ENCODE measurements at regions of chr12 and their contacts with region 1.

Region 1: GRCh38 chr12:109888179-109889020 is 8.1 kb upstream of the GLTP start:
- DNase-seq: peak; percentile 32 to 48 (median 39)
- H3K4me3 ChIP-seq: peak overlapping the region; percentile 2 to 8
- H3K4me3 Mint-ChIP-seq: peak overlapping the region; percentile 60 to 86 (median 82)
- H3K27ac ChIP-seq: peak overlapping the region; percentile 52
- H3K27ac Mint-ChIP-seq: peak overlapping the region; percentile 82 to 98 (median 97)
- H3K4me1 ChIP-seq: peaks cover 42% of the 10 kb centered on the region
- H3K4me1 Mint-ChIP-seq: peaks cover 22 to 44% (median 35%) of the 10 kb centered on the region in 4 donors
- H3K27me3 ChIP-seq: no peaks in the 10 kb centered on the region
- H3K27me3 Mint-ChIP-seq: peaks cover 0 to 2% of the 10 kb centered on the region in 2 donors

Region 2: DNA sequence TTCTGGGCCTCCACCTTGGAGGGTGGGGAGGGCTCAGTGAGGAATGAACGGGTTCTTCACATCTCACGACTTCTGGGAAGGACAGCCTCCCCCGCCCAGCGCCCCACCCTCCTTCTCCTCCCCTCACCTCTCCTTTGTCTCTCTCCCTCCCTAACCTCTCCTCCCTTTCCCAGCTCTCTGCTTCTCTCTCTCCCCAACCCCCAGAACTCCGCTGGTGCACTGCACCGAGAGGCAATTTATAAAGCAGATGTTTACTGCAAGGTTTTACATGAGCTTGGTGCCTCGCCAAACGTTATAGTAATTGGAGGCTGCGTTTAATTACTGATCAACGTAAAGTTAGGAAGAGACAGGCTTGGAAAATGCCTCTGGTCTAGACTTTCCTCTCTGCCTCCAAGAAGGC is 217.7 kb before region 1 on chr12:
- CTCF ChIA-PET with region 1: no interaction called
- POLR2A ChIA-PET with region 1: no interaction called
- intact Hi-C with region 1: no loop called
- DNase-seq: no peak
- H3K4me3 ChIP-seq: no peak overlapping the region
- H3K4me3 Mint-ChIP-seq: no peak overlapping the region
- H3K27ac ChIP-seq: no peak overlapping the region
- H3K27ac Mint-ChIP-seq: no peak overlapping the region
- H3K4me1 ChIP-seq: no peaks in the 10 kb centered on the region
- H3K4me1 Mint-ChIP-seq: no peaks in the 10 kb centered on the region
- H3K27me3 ChIP-seq: no peaks in the 10 kb centered on the region
- H3K27me3 Mint-ChIP-seq: peaks cover 7 to 13% of the 10 kb centered on the region in 2 donors

Region 3: GRCh38 chr12:109706747-109707469 is 181.5 kb before region 1 on chr12:
- CTCF ChIA-PET with region 1: no interaction called
- POLR2A ChIA-PET with region 1: no interaction called
- intact Hi-C with region 1: no loop called
- DNase-seq: no peak
- H3K4me3 ChIP-seq: no peak overlapping the region
- H3K4me3 Mint-ChIP-seq: no peak overlapping the region
- H3K27ac ChIP-seq: no peak overlapping the region
- H3K27ac Mint-ChIP-seq: no peak overlapping the region
- H3K4me1 ChIP-seq: no peaks in the 10 kb centered on the region
- H3K4me1 Mint-ChIP-seq: no peaks in the 10 kb centered on the region
- H3K27me3 ChIP-seq: no peaks in the 10 kb centered on the region
- H3K27me3 Mint-ChIP-seq: peaks cover 14 to 24% of the 10 kb centered on the region in 2 donors

Region 4: DNA sequence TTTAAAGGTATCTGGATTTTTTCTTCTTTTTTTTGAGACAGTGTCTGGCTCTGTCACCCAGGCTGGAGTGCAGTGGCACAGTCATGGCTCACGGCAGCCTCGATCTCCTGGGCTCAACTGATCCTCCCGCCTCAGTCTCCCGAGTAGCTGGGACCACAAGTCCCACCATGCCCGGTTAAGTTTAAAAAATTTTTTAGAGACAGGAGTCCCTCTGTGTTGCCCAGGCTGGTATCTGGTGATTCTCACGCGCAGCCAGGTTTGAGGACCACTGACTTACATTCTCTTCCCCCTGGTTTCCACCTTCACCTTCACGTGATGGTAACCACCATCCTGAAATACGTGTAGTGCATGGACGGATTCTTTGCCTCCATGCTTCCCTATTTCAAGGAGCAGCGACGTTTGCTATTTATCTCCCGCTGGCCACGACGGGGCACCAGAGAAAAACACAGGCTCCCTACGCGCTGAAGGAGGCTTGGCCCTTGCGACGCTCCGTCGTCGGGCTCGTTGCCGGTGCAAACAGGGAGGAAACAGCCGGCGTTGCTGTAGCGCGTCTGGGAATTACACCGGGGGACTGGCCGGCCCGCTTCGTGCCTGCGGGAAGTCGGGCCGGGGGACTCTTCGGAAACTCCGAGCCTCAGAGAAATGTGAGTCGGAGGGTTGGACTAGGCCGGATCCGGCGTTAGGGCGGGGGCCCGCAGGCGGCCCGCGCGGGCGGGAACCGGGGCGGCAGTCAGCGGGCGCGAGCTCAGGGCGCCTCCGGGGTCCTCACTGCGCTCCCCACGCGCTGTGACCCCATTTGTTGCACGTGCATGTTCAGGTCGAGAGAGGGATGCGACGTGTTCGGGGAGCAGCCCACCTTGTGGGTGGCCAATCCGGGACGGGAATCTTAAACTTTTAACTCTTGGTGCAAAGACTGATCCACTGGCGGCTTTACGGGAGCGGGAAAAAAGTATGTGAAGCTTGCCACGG is 11.7 kb after region 1 on chr12 and contains the start of gene TCHP:
- CTCF ChIA-PET with region 1: interaction called, 13 read pairs
- POLR2A ChIA-PET with region 1: interaction called, 55 read pairs
- intact Hi-C with region 1: loop called (anchors 1 kb)
- DNase-seq: peak; percentile 76 to 83 (median 80)
- H3K4me3 ChIP-seq: peak within 1 kb of the TSS; percentile 72 to 87
- H3K4me3 Mint-ChIP-seq: peak within 1 kb of the TSS; percentile 90 to 99 (median 94)
- H3K27ac ChIP-seq: peak within 1 kb of the TSS; percentile 70
- H3K27ac Mint-ChIP-seq: peak within 1 kb of the TSS; percentile 85 to 99 (median 97)
- H3K4me1 ChIP-seq: peaks cover 22% of the 10 kb centered on the region
- H3K4me1 Mint-ChIP-seq: peaks cover 14 to 37% (median 23%) of the 10 kb centered on the region in 4 donors
- H3K27me3 ChIP-seq: no peaks in the 10 kb centered on the region
- H3K27me3 Mint-ChIP-seq: no peaks in the 10 kb centered on the region
- total RNA-seq, gene TCHP: 41.4 to 45.0 TPM

Region 5: GRCh38 chr12:109910969-109911348 is 22.6 kb after region 1 on chr12:
- CTCF ChIA-PET with region 1: no interaction called
- POLR2A ChIA-PET with region 1: no interaction called
- intact Hi-C with region 1: no loop called
- DNase-seq: peak in 1 of 5 donors; percentile 8
- H3K4me3 ChIP-seq: no peak overlapping the region
- H3K4me3 Mint-ChIP-seq: no peak overlapping the region
- H3K27ac ChIP-seq: no peak overlapping the region
- H3K27ac Mint-ChIP-seq: peak overlapping the region in 4 of 7 donors; percentile 15 to 54 (median 31)
- H3K4me1 ChIP-seq: no peaks in the 10 kb centered on the region
- H3K4me1 Mint-ChIP-seq: peaks cover 0 to 4% (median 2%) of the 10 kb centered on the region in 4 donors
- H3K27me3 ChIP-seq: no peaks in the 10 kb centered on the region
- H3K27me3 Mint-ChIP-seq: no peaks in the 10 kb centered on the region

Region 6: DNA sequence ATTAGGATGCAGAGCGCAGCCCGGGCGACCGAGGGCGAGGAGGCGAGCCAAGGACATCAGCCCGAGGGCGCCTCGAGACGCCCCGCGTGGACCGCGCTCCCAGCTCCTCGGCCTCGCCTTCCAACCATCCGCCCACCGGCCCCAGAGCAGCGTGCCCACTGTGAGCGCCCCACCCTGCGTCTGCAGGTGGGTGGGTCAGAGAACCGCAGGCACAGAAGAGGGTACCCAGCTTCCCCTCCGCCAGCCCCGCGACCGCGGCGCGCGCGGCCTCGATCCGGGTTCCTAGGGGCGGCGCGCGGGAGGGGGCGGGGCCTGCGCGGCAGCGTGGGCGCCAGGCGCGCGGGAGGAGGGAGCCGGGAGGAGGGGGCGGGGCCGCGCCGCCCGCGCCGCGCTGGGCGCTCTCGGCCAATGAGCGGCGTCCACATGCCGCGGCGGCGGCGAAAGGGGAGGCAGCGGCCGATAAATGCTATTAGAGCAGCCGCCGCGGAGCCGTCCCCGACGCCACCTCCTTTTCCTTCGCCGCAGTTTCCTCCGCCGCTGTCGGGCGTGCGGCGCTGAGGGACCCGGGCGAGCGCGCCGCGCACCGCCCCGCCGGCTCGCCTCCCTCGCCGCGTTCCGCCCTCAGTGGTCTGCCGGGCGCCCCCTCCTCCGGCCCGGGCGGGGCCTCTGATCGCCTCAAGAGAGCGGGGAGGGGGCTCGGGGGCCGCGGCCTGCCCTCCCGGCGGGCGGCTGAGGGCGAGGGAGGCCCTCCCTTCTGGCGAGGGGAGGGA is 392.6 kb after region 1 on chr12 and contains the start of gene ATP2A2:
- CTCF ChIA-PET with region 1: no interaction called
- POLR2A ChIA-PET with region 1: no interaction called
- intact Hi-C with region 1: no loop called
- DNase-seq: peak; percentile 89 to 93 (median 92)
- H3K4me3 ChIP-seq: peak within 1 kb of the TSS; percentile 87 to 88
- H3K4me3 Mint-ChIP-seq: peak within 1 kb of the TSS; percentile 91 to 98 (median 94)
- H3K27ac ChIP-seq: peak within 1 kb of the TSS; percentile 85
- H3K27ac Mint-ChIP-seq: peak within 1 kb of the TSS; percentile 90 to 98 (median 94)
- H3K4me1 ChIP-seq: peaks cover 47% of the 10 kb centered on the region
- H3K4me1 Mint-ChIP-seq: peaks cover 36 to 53% (median 43%) of the 10 kb centered on the region in 4 donors
- H3K27me3 ChIP-seq: no peaks in the 10 kb centered on the region
- H3K27me3 Mint-ChIP-seq: no peaks in the 10 kb centered on the region
- total RNA-seq, gene ATP2A2: 90.4 to 91.0 TPM